Activated naive CD8-positive, alpha-beta T cell treated with anti-CD3 and anti-CD28 coated beads, Interleukin-2, amount 10 ng/mL, durations not matched to agents 7 days and 5 days (primary cell): ENCODE measurements at regions of chr3 and their contacts with region 1.

Region 1: GRCh38 chr3:10192953-10193691 is 28.4 kb downstream of the IRAK2 start:
- DNase-seq: peak; percentile 47
- ATAC-seq: peak; percentile 27
- H3K4me3 Mint-ChIP-seq: peak overlapping the region; percentile 78
- H3K27ac Mint-ChIP-seq: peak overlapping the region; percentile 97
- H3K4me1 Mint-ChIP-seq: peaks cover 67% of the 10 kb centered on the region
- H3K27me3 Mint-ChIP-seq: no peaks in the 10 kb centered on the region

Region 2: DNA sequence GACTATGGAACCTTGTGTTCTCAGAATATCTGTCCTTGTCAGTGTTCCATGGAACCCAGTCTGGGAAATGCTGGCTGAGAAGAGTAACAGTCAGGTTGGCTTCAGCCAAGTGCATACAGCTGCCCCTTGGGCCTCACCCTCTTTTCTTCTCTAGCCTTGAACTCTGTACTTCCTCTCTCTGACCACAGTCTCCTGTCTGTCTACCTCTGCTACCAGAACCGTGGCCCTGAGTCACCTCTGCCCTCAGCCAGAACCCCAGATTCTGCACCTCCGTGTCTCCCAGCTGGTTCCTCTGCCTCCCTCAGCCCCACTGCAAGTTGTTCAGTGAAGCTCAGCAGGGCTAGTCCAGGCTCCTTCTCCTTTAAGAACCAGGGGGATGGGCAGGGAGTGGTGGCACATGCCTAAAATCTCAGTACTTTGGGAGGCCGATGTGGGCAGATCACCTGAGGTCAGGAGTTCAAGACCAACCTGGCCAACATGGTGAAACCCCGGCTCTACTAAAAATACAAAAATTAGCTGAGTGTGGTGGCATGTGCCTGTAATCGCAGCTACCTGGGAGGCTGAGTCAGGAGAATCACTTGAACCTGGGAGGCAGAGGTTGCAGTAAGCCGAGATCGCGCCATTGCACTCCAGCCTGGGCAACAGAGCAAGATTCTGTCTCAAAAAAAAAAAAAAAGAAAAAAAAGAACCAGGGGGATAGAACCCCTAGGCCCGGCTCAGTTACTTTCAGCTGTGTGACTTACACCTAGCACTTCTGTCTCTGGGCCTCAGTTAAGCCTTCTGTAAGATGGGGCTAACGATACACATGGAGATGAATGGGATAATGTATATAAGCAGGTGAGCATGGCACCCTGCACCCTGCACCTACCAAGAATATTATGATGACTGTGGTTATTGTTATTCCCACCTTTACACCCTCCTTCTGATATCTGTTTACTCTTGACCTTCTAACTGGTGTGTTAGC is 30.8 kb after region 1 on chr3:
- POLR2A ChIA-PET with region 1: interaction called, 35 read pairs
- DNase-seq: peak; percentile 63
- ATAC-seq: peak; percentile 73
- H3K4me3 Mint-ChIP-seq: peak overlapping the region; percentile 46
- H3K27ac Mint-ChIP-seq: peak overlapping the region; percentile 21
- H3K4me1 Mint-ChIP-seq: peaks cover 54% of the 10 kb centered on the region
- H3K27me3 Mint-ChIP-seq: no peaks in the 10 kb centered on the region